ENCODE measurements at regions of chr6 and their contacts with region 1.

Region 1: DNA sequence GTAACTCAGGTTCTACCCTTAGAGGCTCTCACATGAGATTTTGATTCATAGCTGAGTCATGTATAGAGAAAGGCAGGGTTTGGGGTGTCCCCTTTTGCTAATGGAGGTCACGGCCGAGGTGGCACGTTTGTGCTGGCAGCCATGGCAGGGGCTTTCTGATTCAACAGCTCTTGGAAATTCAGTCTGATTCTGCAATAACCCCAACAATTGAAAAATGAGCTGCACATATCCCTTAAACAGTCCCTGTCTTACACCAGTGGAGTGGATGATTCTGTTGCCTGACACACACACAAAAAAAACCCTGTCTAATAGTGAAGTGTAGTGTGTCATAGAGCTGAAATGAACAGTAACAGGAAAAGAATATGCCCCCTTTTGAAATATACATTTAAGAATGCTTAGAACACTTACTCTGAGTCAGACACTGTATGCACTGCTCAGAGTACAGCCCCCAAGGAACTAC is 40.4 kb upstream of the ARG1 start:
- DNase-seq: no peak
- H3K4me3 ChIP-seq: no peak overlapping the region
- H3K27ac ChIP-seq: no peak overlapping the region
- H3K4me1 ChIP-seq: peaks cover 12% of the 10 kb centered on the region
- CTCF ChIP-seq: no peak

Region 2: DNA sequence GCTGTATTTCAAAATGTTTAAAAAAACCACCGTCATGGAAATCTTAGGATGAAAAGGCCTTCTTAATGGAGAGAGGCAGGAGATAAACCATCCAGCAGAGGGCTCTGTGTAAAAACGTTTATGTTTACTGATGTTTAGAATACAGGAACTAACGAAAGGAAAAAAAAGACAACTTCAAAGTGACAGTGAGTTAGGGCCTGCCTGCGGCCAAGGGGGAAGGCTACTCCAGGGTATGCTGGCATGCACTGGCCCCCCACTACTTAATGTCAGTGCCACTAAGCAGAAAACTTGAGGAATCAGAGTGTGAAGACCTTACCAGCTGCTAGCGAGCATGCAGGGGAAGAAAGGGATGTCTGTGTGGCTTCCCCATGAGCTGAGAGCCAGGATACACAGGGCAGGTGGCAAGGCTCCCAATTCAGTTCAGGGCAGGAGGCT is 349.6 kb before region 1 on chr6:
- CTCF ChIA-PET with region 1: interaction called, 3 read pairs
- POLR2A ChIA-PET with region 1: no interaction called
- intact Hi-C with region 1: loop called (anchors 1 kb)
- DNase-seq: peak; percentile 82
- H3K4me3 ChIP-seq: no peak overlapping the region
- H3K27ac ChIP-seq: no peak overlapping the region
- H3K4me1 ChIP-seq: peaks cover 6% of the 10 kb centered on the region
- CTCF ChIP-seq: peak; percentile 94